SK-N-SH (cell line): ENCODE measurements at regions of chr2 and their contacts with region 1.

Region 1: GRCh38 chr2:227033471-227034148 is 130.4 kb downstream of the COL4A4 start:
- DNase-seq: peak; percentile 77
- H3K4me3 ChIP-seq: peak overlapping the region in 1 of 2 experiments; percentile 36; a peak in 1 of 4 replicates
- H3K27ac ChIP-seq: peak overlapping the region in 1 of 2 experiments; percentile 77; a peak in 2 of 4 replicates
- H3K4me1 ChIP-seq: peaks cover 0 to 25% of the 10 kb centered on the region in 2 experiments; a peak in 2 of 4 replicates
- H3K27me3 ChIP-seq: no peaks in the 10 kb centered on the region; the same call in 1 of the 2 replicates
- CTCF ChIP-seq: peak; percentile 78
- EP300 ChIP-seq: peak in 1 of 2 experiments; percentile 57; a peak in 2 of 4 replicates
- RAD21 ChIP-seq: peak; percentile 63

Region 2: GRCh38 chr2:226215902-226216503 is 817.6 kb before region 1 on chr2:
- CTCF ChIA-PET with region 1: no interaction called
- POLR2A ChIA-PET with region 1: no interaction called
- DNase-seq: peak; percentile 23
- H3K4me3 ChIP-seq: no peak overlapping the region
- H3K27ac ChIP-seq: no peak overlapping the region
- H3K4me1 ChIP-seq: peaks cover 0 to 22% of the 10 kb centered on the region in 2 experiments; a peak in 3 of 4 replicates
- H3K27me3 ChIP-seq: no peaks in the 10 kb centered on the region
- CTCF ChIP-seq: peak; percentile 77
- EP300 ChIP-seq: no peak
- RAD21 ChIP-seq: peak; percentile 77

Region 3: GRCh38 chr2:227010433-227010832 is 23.2 kb before region 1 on chr2:
- CTCF ChIA-PET with region 1: interaction called, 11 read pairs
- POLR2A ChIA-PET with region 1: no interaction called
- DNase-seq: no peak
- H3K4me3 ChIP-seq: no peak overlapping the region
- H3K27ac ChIP-seq: no peak overlapping the region
- H3K4me1 ChIP-seq: peaks cover 0 to 2% of the 10 kb centered on the region in 2 experiments; a peak in 1 of 4 replicates
- H3K27me3 ChIP-seq: no peaks in the 10 kb centered on the region
- CTCF ChIP-seq: no peak
- EP300 ChIP-seq: no peak
- RAD21 ChIP-seq: no peak

Region 4: GRCh38 chr2:227020416-227020815 is 13.2 kb before region 1 on chr2:
- CTCF ChIA-PET with region 1: interaction called, 30 read pairs
- POLR2A ChIA-PET with region 1: no interaction called
- DNase-seq: no peak
- H3K4me3 ChIP-seq: no peak overlapping the region
- H3K27ac ChIP-seq: no peak overlapping the region
- H3K4me1 ChIP-seq: peaks cover 0 to under 1% of the 10 kb centered on the region in 2 experiments; a peak in 1 of 4 replicates
- H3K27me3 ChIP-seq: no peaks in the 10 kb centered on the region
- CTCF ChIP-seq: no peak
- EP300 ChIP-seq: no peak
- RAD21 ChIP-seq: no peak

Region 5: DNA sequence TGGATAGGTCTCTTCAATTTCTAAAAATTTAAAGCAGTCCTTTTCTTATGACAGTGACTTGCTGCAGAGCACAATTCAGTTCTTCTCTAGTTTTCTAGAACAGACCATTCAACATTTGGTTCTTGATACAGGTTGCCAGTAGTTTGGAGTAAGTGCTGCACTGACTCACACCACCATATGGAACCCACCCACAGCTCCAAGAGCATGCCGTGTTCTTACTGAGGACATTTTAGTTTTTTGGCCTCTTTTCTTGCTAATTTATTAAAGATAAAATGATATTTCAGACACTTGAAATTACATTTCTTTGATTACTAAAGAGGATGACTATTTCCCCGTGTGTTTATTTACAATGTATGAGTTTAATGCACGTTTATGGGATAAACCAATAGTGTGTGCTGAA is 10.4 kb after region 1 on chr2:
- CTCF ChIA-PET with region 1: interaction called, 16 read pairs
- POLR2A ChIA-PET with region 1: no interaction called
- DNase-seq: no peak
- H3K4me3 ChIP-seq: no peak overlapping the region
- H3K27ac ChIP-seq: no peak overlapping the region
- H3K4me1 ChIP-seq: no peaks in the 10 kb centered on the region; a peak in 1 of 4 replicates
- H3K27me3 ChIP-seq: no peaks in the 10 kb centered on the region; the same call in 1 of the 2 replicates
- CTCF ChIP-seq: no peak
- EP300 ChIP-seq: no peak
- RAD21 ChIP-seq: no peak

Region 6: GRCh38 chr2:227052879-227053278 is 19.3 kb after region 1 on chr2:
- CTCF ChIA-PET with region 1: interaction called, 16 read pairs
- POLR2A ChIA-PET with region 1: no interaction called
- DNase-seq: no peak
- H3K4me3 ChIP-seq: no peak overlapping the region
- H3K27ac ChIP-seq: no peak overlapping the region
- H3K4me1 ChIP-seq: peaks cover 0 to 11% of the 10 kb centered on the region in 2 experiments; a peak in 2 of 4 replicates
- H3K27me3 ChIP-seq: no peaks in the 10 kb centered on the region; the same call in 1 of the 2 replicates
- CTCF ChIP-seq: no peak
- EP300 ChIP-seq: no peak
- RAD21 ChIP-seq: no peak

Region 7: GRCh38 chr2:227095346-227095745 is 61.7 kb after region 1 on chr2:
- CTCF ChIA-PET with region 1: interaction called, 17 read pairs
- POLR2A ChIA-PET with region 1: no interaction called
- DNase-seq: no peak
- H3K4me3 ChIP-seq: no peak overlapping the region
- H3K27ac ChIP-seq: no peak overlapping the region
- H3K4me1 ChIP-seq: peaks cover 0 to 5% of the 10 kb centered on the region in 2 experiments; a peak in 1 of 4 replicates
- H3K27me3 ChIP-seq: no peaks in the 10 kb centered on the region; the same call in 1 of the 2 replicates
- CTCF ChIP-seq: no peak
- EP300 ChIP-seq: no peak
- RAD21 ChIP-seq: no peak

Region 8: GRCh38 chr2:227106845-227107759 is 73.5 kb after region 1 on chr2:
- CTCF ChIA-PET with region 1: interaction called, 47 read pairs
- POLR2A ChIA-PET with region 1: no interaction called
- DNase-seq: peak; percentile 45
- H3K4me3 ChIP-seq: no peak overlapping the region; a peak in 1 of 4 replicates
- H3K27ac ChIP-seq: no peak overlapping the region
- H3K4me1 ChIP-seq: no peaks in the 10 kb centered on the region; a peak in 1 of 4 replicates
- H3K27me3 ChIP-seq: peaks cover 11% of the 10 kb centered on the region; the same call in 1 of the 2 replicates
- CTCF ChIP-seq: peak; percentile 85
- EP300 ChIP-seq: no peak
- RAD21 ChIP-seq: peak; percentile 95

Region 9: DNA sequence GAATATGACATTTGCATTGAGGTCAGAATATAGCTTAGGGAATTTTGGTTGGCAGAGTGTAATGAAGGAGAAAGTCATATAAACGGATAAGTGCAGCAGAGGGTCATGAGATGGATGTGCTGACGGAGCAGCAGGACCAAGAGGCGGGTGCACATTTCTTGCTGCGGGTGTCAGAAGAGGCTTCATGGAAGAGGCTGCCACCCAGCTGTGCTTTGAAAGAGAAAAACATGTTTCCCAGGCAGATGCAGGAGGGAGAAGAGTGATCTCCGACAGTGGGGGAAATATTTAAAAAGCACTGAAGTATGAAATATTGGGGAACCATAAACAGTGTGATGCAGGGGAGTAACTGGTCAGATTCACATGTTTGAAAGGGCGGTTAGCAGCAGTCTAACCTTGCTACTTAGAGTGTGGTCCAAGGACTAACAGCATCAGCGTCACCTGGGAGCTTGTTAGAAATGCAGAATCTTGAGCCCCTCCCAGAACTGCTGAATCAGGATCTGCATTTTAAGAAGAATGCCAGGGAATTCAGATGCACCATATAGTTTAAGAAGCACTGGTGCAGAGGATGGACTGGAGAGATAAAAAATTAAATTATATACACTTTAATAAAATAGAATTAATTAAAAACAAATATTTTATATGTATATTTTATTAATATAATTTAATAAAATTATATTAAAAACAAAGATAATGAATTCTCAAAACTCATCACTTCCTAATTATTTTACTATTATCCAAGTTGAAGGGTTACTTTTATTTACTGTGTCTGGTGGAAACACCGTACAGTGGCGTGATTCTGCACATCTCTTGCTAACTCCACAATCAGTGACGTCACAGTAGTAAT is 390.3 kb after region 1 on chr2:
- CTCF ChIA-PET with region 1: no interaction called
- POLR2A ChIA-PET with region 1: no interaction called
- DNase-seq: no peak
- H3K4me3 ChIP-seq: no peak overlapping the region
- H3K27ac ChIP-seq: no peak overlapping the region
- H3K4me1 ChIP-seq: no peaks in the 10 kb centered on the region
- H3K27me3 ChIP-seq: no peaks in the 10 kb centered on the region
- CTCF ChIP-seq: no peak
- EP300 ChIP-seq: no peak
- RAD21 ChIP-seq: no peak